Heart left ventricle (tissue), 16 donors: ENCODE measurements at regions of chr17 and their contacts with region 1.

Region 1: GRCh38 chr17:78082988-78083387 is 45.6 kb downstream of the TMC6 start:
- DNase-seq: no peak
- ATAC-seq: peak in 1 of 4 donors; percentile 23
- H3K4me3 ChIP-seq: no peak overlapping the region
- H3K27ac ChIP-seq: peak overlapping the region in 11 of 12 donors; percentile 6 to 84 (median 64)
- H3K4me1 ChIP-seq: peaks cover 0 to 42% (median 16%) of the 10 kb centered on the region in 12 donors
- H3K27me3 ChIP-seq: no peaks in the 10 kb centered on the region
- CTCF ChIP-seq: no peak
- POLR2A ChIP-seq: no peak

Region 2: GRCh38 chr17:77666881-77667395 is 416.1 kb before region 1 on chr17:
- intact Hi-C with region 1: no loop called
- DNase-seq: no peak
- ATAC-seq: no peak
- H3K4me3 ChIP-seq: peak overlapping the region in 2 of 12 donors; percentile 5 to 18
- H3K27ac ChIP-seq: peak overlapping the region in 1 of 12 donors; percentile 63
- H3K4me1 ChIP-seq: peaks cover 0 to 10% (median 2%) of the 10 kb centered on the region in 12 donors
- H3K27me3 ChIP-seq: no peaks in the 10 kb centered on the region
- CTCF ChIP-seq: no peak
- POLR2A ChIP-seq: no peak

Region 3: DNA sequence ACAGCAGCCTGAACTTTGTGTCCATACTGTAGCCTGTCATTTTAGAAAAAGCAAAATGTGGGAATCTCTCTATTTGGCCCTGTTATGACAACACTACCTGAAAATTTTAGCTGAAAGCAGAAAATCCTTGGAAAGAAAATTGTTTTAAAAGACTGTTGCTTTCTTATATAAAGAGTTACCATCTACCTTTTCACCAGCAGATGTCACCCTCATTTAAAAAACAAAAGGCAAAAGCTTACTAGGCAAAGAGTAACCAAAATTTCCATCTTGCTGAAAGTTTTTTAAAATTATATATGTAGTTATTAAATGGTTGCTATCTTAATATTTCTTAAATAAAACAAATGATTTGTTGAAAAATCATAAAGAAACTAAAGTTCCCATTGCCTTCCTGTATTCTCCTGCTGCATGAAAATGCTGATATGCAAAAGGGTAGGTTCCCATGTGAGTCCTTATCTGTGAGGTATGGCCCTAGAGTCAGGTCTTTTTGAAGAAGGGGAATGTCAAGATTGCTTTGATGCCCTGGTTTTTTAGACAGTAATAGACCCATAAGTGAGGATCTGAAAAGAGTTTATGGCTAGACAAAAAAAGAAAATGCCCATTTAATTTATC is 63.5 kb before region 1 on chr17:
- intact Hi-C with region 1: loop called in 4 of 10 experiments (anchors 5 to 10 kb)
- DNase-seq: no peak
- ATAC-seq: no peak
- H3K4me3 ChIP-seq: no peak overlapping the region
- H3K27ac ChIP-seq: peak overlapping the region in 1 of 12 donors; percentile 1
- H3K4me1 ChIP-seq: peaks cover 0 to 21% (median 4%) of the 10 kb centered on the region in 12 donors
- H3K27me3 ChIP-seq: no peaks in the 10 kb centered on the region
- CTCF ChIP-seq: peak; percentile 52 to 74 (median 60)
- POLR2A ChIP-seq: no peak

Region 4: GRCh38 chr17:78026381-78026780 is 56.6 kb before region 1 on chr17:
- intact Hi-C with region 1: loop called in 4 of 10 experiments (anchors 5 to 10 kb)
- DNase-seq: no peak
- ATAC-seq: no peak
- H3K4me3 ChIP-seq: no peak overlapping the region
- H3K27ac ChIP-seq: peak overlapping the region in 2 of 12 donors; percentile 26 to 45
- H3K4me1 ChIP-seq: peaks cover 0 to 24% (median 13%) of the 10 kb centered on the region in 12 donors
- H3K27me3 ChIP-seq: no peaks in the 10 kb centered on the region
- CTCF ChIP-seq: no peak
- POLR2A ChIP-seq: no peak

Region 5: DNA sequence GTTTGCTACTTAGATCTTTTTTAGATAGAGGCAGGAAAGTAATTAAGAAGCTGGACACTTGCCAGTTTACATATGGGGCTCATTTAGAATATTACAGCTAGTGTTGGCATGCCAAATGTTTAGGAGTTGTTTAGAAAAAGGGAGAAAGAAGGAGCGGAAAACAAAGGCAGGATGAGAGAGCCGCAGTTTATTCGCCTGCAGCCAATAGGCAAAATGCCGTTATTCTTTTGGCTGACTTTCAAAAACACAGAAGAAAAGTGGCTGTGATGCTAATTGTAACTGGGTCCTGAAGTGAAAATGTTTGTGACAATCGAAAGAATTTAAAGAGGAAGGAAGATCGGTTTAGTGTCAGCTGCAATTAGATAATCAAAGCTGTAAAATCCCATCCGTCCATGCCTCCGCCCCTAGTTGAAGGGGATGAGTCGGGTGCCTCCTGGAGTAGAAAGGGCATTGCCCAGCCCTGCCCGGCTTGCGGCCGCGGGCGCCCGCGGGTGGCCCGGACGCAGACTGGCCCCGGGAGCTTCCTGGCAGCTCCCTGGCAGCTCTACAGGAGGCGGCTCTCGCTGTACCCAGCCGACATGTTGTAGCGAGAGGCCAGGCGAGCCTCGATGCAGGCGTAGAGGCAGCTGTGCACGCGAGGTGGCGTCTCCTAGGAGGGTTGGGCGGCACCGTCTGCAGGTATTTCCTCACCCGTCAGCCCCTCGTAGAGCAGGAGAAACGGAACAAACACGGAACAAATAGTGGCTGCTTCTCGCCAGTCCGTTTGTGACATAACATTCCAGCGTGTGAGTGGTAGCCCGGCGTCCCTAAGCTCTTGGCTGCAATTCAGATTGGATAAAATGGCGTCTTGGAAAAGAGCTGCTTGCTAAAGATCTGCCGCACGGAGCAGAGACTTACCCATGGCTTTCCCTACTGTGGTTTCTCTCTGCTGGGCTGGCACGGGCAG is 42.3 kb before region 1 on chr17:
- intact Hi-C with region 1: loop called in 1 of 10 experiments (anchors 2 kb)
- DNase-seq: peak; percentile 50 to 84 (median 79)
- ATAC-seq: peak; percentile 74 to 87 (median 82)
- H3K4me3 ChIP-seq: peak overlapping the region; percentile 18 to 68 (median 56)
- H3K27ac ChIP-seq: peak overlapping the region; percentile 80 to 98 (median 92)
- H3K4me1 ChIP-seq: peaks cover 0 to 64% (median 15%) of the 10 kb centered on the region in 12 donors
- H3K27me3 ChIP-seq: no peaks in the 10 kb centered on the region
- CTCF ChIP-seq: peak in 3 of 12 donors; percentile 13 to 20 (median 19)
- POLR2A ChIP-seq: peak in 1 of 2 donors; percentile 32